Posterior vena cava (tissue), 2 donors: ENCODE measurements at regions of chr12 and their contacts with region 1.

Region 1: DNA sequence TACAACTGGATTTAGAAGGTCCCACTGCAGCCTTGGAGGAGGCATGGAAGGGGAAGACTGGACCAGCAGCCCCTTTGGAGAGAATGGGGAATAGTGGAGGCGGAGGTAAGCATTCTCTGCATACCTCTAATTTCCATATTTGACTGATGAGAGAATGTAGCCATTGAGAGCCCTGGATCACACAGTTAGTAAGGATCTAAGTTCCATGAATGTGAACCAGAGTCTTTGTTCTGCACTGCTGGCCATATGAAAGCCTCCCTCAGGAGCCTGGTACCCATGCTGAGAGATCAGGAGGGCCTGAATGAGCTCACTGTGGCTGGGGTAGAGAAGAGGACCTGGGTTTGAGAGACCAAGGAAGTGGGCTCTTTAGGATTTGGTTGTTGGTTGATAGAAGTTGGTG is 192.1 kb downstream of the TMEM132C start:
- DNase-seq: no peak

Region 2: DNA sequence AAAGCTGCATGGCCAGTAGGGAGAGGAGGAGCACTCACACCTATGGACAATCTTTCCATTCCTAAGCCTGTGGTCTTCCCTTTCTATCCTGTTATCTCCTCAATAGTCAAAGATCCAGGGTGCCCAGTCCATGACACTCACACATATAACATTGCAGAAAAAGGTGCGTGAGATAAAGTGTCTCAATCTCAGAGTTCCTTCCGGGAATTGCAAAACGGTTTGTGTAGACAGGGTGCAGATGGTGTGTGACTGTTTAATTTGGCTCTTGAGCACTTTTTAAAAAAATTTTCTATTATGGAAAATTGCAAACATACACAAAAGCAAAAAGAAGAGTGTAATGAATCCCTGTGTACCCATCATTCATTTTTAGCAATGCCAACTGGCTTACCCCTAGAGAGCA is 1900.3 kb before region 1 on chr12:
- intact Hi-C with region 1: no loop called
- DNase-seq: no peak

Region 3: GRCh38 chr12:127861406-127861805 is 597.7 kb before region 1 on chr12:
- intact Hi-C with region 1: no loop called
- DNase-seq: no peak

Region 4: GRCh38 chr12:127964717-127965116 is 494.4 kb before region 1 on chr12:
- intact Hi-C with region 1: no loop called
- DNase-seq: no peak

Region 5: GRCh38 chr12:128637642-128638606 is 178.9 kb after region 1 on chr12:
- intact Hi-C with region 1: loop called in 1 of 2 experiments (anchors 2 kb)
- DNase-seq: no peak